ENCODE measurements at regions of chr16 and their contacts with region 1.

Region 1: GRCh38 chr16:68843482-68844210 is at the start of gene TANGO6:
- DNase-seq: peak; percentile 89
- ATAC-seq: peak; percentile 92
- H3K4me3 Mint-ChIP-seq: peak within 1 kb of the TSS; percentile 93
- H3K27ac Mint-ChIP-seq: peak within 1 kb of the TSS; percentile 91
- H3K4me1 Mint-ChIP-seq: peaks cover 22% of the 10 kb centered on the region
- H3K27me3 Mint-ChIP-seq: no peaks in the 10 kb centered on the region
- CTCF ChIP-seq: no peak
- total RNA-seq, gene TANGO6: 32.1 and 39.4 TPM in 2 replicates

Region 2: DNA sequence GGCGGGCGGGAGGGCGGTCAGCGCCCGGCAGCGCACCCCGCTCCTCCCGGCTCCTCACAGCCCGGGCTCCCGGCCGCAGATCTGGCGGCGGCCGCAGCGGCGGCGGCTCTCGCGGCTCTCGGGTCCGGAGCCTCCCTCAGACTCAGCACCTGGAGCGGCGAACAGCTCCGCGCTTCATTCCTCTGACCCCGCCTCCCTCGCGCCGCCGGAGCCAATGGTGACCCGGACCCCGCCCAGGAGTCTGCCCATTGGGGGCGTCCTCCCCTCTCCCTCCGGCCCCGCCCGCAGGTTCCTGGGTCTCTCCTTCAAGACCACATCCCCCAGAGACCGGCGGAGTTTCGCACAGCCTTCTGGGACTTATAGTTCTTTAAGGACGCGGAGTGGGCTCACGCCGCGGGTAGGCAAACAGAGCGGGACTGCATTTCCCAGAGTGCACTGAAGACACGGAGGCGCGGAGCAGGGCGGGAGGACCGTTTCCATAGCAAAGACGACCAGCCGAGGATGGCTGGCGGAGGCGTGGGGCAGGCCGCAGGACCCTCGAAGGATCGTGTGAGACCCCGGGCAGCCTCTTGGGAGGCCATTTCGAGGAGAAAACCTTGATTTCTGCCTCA is 395.2 kb before region 1 on chr16 and contains the start of gene SMPD3:
- CTCF ChIA-PET with region 1: no interaction called
- POLR2A ChIA-PET with region 1: no interaction called
- intact Hi-C with region 1: loop called (anchors 10 kb)
- DNase-seq: peak; percentile 95
- ATAC-seq: peak; percentile 98
- H3K4me3 Mint-ChIP-seq: peak within 1 kb of the TSS; percentile 61
- H3K27ac Mint-ChIP-seq: peak within 1 kb of the TSS; percentile 7
- H3K4me1 Mint-ChIP-seq: peaks cover 23% of the 10 kb centered on the region
- H3K27me3 Mint-ChIP-seq: peaks cover 12% of the 10 kb centered on the region
- CTCF ChIP-seq: no peak
- total RNA-seq, gene SMPD3: 0.35 and 0.76 TPM in 2 replicates

Region 3: DNA sequence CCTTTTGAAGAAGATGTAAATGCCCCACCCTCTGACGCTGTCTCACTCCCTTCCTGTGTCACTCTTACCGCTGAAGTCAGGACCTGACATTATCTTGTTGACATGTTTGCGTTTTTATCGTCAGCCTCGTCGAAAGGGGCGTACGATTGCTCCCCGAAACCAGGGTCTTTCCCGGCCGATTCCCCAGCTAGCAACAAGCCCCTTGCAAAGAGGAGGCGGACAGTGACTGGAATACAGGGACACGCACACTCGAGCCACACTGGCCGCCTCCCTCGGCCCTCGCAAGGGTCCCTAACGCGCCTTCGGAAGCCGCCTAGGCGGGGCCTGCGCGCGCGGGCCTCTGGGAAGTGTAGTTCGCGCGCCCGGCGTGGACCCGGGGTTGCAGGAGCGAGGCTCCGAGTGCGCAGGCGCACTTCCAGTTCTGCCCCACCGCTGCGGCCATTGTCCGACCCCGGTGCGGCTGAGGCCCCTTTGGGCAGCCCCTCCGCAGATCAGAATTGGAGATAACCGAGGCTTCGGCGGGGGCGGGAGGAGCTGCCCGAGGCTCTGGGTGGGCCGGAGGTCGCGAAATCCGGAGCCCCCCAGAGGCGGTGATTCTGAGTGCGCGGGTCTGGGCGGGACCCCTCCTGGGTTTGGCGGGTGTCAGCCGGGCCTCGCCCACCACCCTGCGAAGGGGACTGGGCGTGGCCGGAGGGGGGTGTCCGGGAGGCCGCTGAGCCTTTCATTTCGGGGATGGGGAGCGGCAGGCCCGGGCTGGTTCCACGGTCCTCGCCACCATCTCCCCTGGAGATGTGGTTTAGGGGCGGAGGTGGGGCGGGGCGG is 304.6 kb before region 1 on chr16 and contains the start of gene ZFP90:
- CTCF ChIA-PET with region 1: no interaction called
- POLR2A ChIA-PET with region 1: no interaction called
- intact Hi-C with region 1: loop called (anchors 1 kb)
- DNase-seq: peak; percentile 87
- ATAC-seq: peak; percentile 97
- H3K4me3 Mint-ChIP-seq: peak within 1 kb of the TSS; percentile 93
- H3K27ac Mint-ChIP-seq: peak within 1 kb of the TSS; percentile 93
- H3K4me1 Mint-ChIP-seq: peaks cover 14% of the 10 kb centered on the region
- H3K27me3 Mint-ChIP-seq: no peaks in the 10 kb centered on the region
- CTCF ChIP-seq: no peak
- total RNA-seq, gene ZFP90: 18.8 and 25.1 TPM in 2 replicates

Region 4: GRCh38 chr16:68951991-68952877 is 108.6 kb after region 1 on chr16:
- CTCF ChIA-PET with region 1: no interaction called
- POLR2A ChIA-PET with region 1: no interaction called
- intact Hi-C with region 1: no loop called
- DNase-seq: no peak
- ATAC-seq: no peak
- H3K4me3 Mint-ChIP-seq: no peak overlapping the region
- H3K27ac Mint-ChIP-seq: no peak overlapping the region
- H3K4me1 Mint-ChIP-seq: no peaks in the 10 kb centered on the region
- H3K27me3 Mint-ChIP-seq: no peaks in the 10 kb centered on the region
- CTCF ChIP-seq: no peak

Region 5: DNA sequence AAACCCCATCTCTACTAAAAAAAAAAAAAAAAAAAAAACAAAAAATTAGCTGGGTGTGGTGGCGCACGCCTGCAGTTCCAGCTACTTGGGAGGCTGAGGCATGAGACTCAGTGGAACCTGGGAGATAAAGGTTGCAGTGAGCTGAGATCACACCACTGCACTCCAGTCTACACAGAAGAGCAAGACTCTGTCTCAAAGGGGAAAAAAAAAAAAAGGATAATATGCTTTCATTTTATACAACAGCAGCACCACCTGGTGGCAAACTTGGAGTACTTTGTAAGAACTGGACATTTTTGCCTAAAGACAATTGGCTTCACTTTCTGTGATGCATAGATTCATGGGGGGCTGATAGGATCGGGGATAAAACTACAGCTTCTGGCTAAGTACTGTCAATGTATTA is 280.3 kb after region 1 on chr16:
- CTCF ChIA-PET with region 1: interaction called, 4 read pairs
- POLR2A ChIA-PET with region 1: interaction called, 6 read pairs
- intact Hi-C with region 1: loop called (anchors 1 kb)
- DNase-seq: no peak
- ATAC-seq: peak; percentile 69
- H3K4me3 Mint-ChIP-seq: no peak overlapping the region
- H3K27ac Mint-ChIP-seq: no peak overlapping the region
- H3K4me1 Mint-ChIP-seq: peaks cover 13% of the 10 kb centered on the region
- H3K27me3 Mint-ChIP-seq: no peaks in the 10 kb centered on the region
- CTCF ChIP-seq: peak; percentile 26

Region 6: DNA sequence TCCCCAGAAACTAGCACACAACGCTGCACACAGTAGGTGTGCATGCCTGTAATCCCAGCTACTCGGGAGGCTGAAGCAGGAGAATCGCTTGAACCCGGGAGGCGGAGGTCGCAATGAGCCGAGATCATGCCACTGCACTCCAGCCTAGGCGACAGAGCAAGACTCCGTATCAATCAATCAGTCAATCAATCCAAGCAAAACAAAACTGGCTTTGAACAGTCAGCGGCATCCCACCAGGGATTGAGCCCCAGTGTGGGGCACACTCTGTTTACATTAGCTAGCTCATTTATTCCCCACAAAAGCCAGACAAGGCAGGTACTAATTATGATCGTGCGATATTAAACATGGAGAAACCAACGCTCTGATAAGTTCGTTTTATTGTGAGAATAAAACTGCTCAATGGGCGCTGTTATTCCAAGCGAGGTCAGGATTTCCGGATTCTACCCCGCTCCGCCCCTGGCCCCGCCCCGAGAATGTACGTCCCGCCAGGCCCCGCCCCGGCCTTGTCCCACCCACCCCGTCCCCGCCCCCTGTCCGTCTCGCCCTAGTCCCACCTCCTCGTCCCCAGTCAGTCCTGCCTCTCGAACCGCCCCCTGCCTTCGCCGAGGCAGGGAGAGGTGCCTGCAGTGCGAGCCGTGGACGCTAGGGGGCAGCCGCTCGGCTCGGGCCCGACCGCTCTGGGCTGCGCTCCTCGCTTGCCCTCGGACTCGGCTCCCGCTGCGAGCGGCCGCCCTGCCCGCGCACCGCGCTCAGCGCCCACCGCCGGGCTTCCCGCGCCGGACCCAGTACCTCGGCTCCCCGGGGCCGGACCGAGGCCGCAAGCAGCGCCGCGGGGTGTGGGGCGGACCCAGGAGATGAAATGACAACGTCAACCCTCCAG is 467.2 kb after region 1 on chr16 and contains the start of gene VPS4A:
- CTCF ChIA-PET with region 1: no interaction called
- POLR2A ChIA-PET with region 1: no interaction called
- intact Hi-C with region 1: loop called (anchors 1 kb)
- DNase-seq: peak; percentile 99
- ATAC-seq: peak; percentile 98
- H3K4me3 Mint-ChIP-seq: peak within 1 kb of the TSS; percentile 98
- H3K27ac Mint-ChIP-seq: peak within 1 kb of the TSS; percentile 91
- H3K4me1 Mint-ChIP-seq: peaks cover 27% of the 10 kb centered on the region
- H3K27me3 Mint-ChIP-seq: no peaks in the 10 kb centered on the region
- CTCF ChIP-seq: no peak
- total RNA-seq, gene VPS4A: 34.2 and 41.7 TPM in 2 replicates

Measured in activated B cell treated with CpG ODN at 0.5 μM for 24 hours (primary cell).